Naive thymus-derived CD4-positive, alpha-beta T cell (primary cell): ENCODE measurements at regions of chr1 and their contacts with region 1.

Region 1: DNA sequence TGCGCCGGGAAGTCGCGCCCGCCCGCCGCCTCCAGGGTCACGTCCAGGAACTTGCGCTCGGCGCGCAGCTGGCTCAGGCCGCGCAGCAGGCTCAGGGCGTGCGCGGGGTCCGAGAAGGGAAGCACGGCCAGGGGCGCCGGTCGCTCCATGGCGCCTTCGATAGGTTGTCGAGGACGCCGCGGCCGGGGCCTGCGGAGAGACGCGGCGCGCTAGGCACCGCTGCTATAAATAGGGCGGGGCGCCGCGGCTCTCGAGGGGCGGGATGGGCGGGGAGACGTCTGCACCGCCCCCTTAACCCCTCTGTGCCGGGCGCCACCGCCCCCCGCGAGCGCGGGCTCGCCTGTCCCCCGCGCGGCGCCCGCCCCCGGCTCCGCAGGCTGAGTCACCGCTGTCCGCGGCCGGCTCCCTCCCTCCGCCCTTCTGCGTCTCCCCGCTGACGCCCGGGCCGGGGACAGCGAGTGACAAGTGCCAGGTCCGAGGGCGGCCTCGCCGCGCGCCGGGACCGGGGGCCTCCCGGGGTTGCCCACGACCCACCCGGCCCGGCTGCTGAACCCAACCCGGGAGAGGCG is at the start of gene KLHL21:
- DNase-seq: peak; percentile 70 to 93 (median 79)
- ATAC-seq: peak; percentile 82
- H3K4me3 ChIP-seq: peak within 1 kb of the TSS; percentile 98
- H3K4me3 Mint-ChIP-seq: peak within 1 kb of the TSS; percentile 89 to 99 (median 96)
- H3K27ac ChIP-seq: peak within 1 kb of the TSS; percentile 94
- H3K27ac Mint-ChIP-seq: peak within 1 kb of the TSS; percentile 95 to 99 (median 98)
- H3K4me1 ChIP-seq: peaks cover 28 to 30% of the 10 kb centered on the region in 2 donors
- H3K4me1 Mint-ChIP-seq: peaks cover 13 to 40% (median 34%) of the 10 kb centered on the region in 7 donors
- H3K27me3 ChIP-seq: no peaks in the 10 kb centered on the region
- H3K27me3 Mint-ChIP-seq: peaks cover 0 to 2% (median 0%) of the 10 kb centered on the region in 5 donors
- total RNA-seq, gene KLHL21: 25.2 to 58.1 (median 33.0) TPM

Region 2: GRCh38 chr1:6205849-6206519 is 396.8 kb before region 1 on chr1 and contains the start of gene RNF207:
- CTCF ChIA-PET with region 1: no interaction called
- POLR2A ChIA-PET with region 1: no interaction called
- intact Hi-C with region 1: loop called in 1 of 2 experiments (anchors 5 kb)
- DNase-seq: peak in 5 of 9 donors; percentile 21 to 86 (median 28)
- ATAC-seq: peak; percentile 67
- H3K4me3 ChIP-seq: peak within 1 kb of the TSS; percentile 58
- H3K4me3 Mint-ChIP-seq: peak within 1 kb of the TSS; percentile 60 to 88 (median 80)
- H3K27ac ChIP-seq: no peak within 1 kb of the TSS
- H3K27ac Mint-ChIP-seq: peak within 1 kb of the TSS in 2 of 9 donors; percentile 36 to 69
- H3K4me1 ChIP-seq: peaks cover 0 to 5% of the 10 kb centered on the region in 2 donors
- H3K4me1 Mint-ChIP-seq: peaks cover 5 to 25% (median 15%) of the 10 kb centered on the region in 7 donors
- H3K27me3 ChIP-seq: peaks cover 0 to 8% of the 10 kb centered on the region in 2 donors
- H3K27me3 Mint-ChIP-seq: peaks cover 0 to 19% (median 6%) of the 10 kb centered on the region in 5 donors
- total RNA-seq, gene RNF207: 0.81 to 83.6 (median 3.1) TPM

Region 3: DNA sequence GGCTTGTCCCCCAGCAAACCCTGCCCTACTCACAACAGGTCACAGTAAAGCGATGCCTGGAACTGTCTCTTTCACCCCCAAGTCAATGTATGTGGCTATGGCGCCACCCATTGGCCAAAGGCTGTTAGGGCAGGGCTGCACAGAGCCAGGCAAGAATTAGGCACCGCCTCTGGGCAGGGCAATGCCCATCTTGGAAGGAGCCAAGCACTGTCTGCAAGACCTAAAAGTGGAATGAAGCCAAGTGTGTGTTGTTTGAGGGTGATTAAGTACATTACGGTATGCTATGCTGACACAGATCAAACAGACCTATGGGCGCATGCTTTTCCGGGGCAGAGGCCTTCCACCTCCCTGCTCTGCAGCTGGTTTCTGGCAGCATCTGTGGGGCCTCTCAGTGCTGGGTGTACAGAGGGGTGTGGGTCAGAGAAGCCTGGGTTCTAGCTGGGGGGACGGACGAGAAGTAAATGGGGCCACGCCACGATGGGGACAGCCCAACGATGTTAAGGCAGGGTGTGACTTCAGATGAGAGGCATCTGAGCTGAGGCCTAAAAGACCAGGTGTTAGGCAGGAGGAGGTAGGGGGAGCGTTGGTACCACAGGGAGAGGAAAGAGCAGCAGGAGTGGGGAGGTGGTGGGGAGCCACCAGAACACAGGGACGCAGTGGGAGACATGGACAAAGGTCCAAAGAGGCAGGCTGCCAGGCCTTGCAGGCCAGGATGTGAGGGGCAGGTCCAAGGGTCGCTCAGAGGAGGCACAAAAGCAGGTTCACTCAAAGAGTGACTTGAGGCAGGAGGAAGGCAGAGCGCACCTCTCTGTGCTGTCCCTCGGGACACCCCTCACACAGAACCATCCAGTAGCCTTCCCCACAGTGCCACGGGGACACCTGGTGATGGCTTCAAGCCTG is 259.0 kb before region 1 on chr1:
- CTCF ChIA-PET with region 1: no interaction called
- POLR2A ChIA-PET with region 1: no interaction called
- intact Hi-C with region 1: no loop called
- DNase-seq: peak; percentile 19 to 67 (median 49)
- ATAC-seq: peak; percentile 73
- H3K4me3 ChIP-seq: no peak overlapping the region
- H3K4me3 Mint-ChIP-seq: no peak overlapping the region
- H3K27ac ChIP-seq: no peak overlapping the region
- H3K27ac Mint-ChIP-seq: peak overlapping the region in 1 of 9 donors; percentile 25
- H3K4me1 ChIP-seq: peaks cover 12 to 13% of the 10 kb centered on the region in 2 donors
- H3K4me1 Mint-ChIP-seq: peaks cover 9 to 24% (median 11%) of the 10 kb centered on the region in 7 donors
- H3K27me3 ChIP-seq: no peaks in the 10 kb centered on the region
- H3K27me3 Mint-ChIP-seq: no peaks in the 10 kb centered on the region

Region 4: GRCh38 chr1:6464514-6464836 is 138.3 kb before region 1 on chr1:
- CTCF ChIA-PET with region 1: no interaction called
- POLR2A ChIA-PET with region 1: interaction called, 11 read pairs
- intact Hi-C with region 1: loop called in 1 of 2 experiments (anchors 2 kb)
- DNase-seq: no peak
- ATAC-seq: no peak
- H3K4me3 ChIP-seq: peak overlapping the region; percentile 89
- H3K4me3 Mint-ChIP-seq: peak overlapping the region; percentile 89 to 98 (median 92)
- H3K27ac ChIP-seq: peak overlapping the region; percentile 94
- H3K27ac Mint-ChIP-seq: peak overlapping the region; percentile 90 to 99 (median 95)
- H3K4me1 ChIP-seq: peaks cover 31 to 53% of the 10 kb centered on the region in 2 donors
- H3K4me1 Mint-ChIP-seq: peaks cover 23 to 55% (median 49%) of the 10 kb centered on the region in 7 donors
- H3K27me3 ChIP-seq: no peaks in the 10 kb centered on the region
- H3K27me3 Mint-ChIP-seq: peaks cover 0 to 3% (median 0%) of the 10 kb centered on the region in 5 donors

Region 5: GRCh38 chr1:6579374-6580118 is 23.2 kb before region 1 on chr1 and contains the start of gene ZBTB48:
- CTCF ChIA-PET with region 1: interaction called, 7 read pairs
- POLR2A ChIA-PET with region 1: interaction called, 153 read pairs
- intact Hi-C with region 1: loop called (anchors 1 kb)
- DNase-seq: peak; percentile 92 to 97 (median 94)
- ATAC-seq: peak; percentile 98
- H3K4me3 ChIP-seq: peak within 1 kb of the TSS; percentile 76
- H3K4me3 Mint-ChIP-seq: peak within 1 kb of the TSS; percentile 76 to 97 (median 96)
- H3K27ac ChIP-seq: peak within 1 kb of the TSS; percentile 91
- H3K27ac Mint-ChIP-seq: peak within 1 kb of the TSS; percentile 88 to 98 (median 95)
- H3K4me1 ChIP-seq: peaks cover 25 to 27% of the 10 kb centered on the region in 2 donors
- H3K4me1 Mint-ChIP-seq: peaks cover 27 to 43% (median 35%) of the 10 kb centered on the region in 7 donors
- H3K27me3 ChIP-seq: no peaks in the 10 kb centered on the region
- H3K27me3 Mint-ChIP-seq: no peaks in the 10 kb centered on the region
- total RNA-seq, gene ZBTB48: 39.1 to 70.4 (median 62.2) TPM

Region 6: GRCh38 chr1:6624710-6625583 is 22.2 kb after region 1 on chr1 and contains the start of gene THAP3:
- CTCF ChIA-PET with region 1: interaction called, 8 read pairs
- POLR2A ChIA-PET with region 1: interaction called, 246 read pairs
- intact Hi-C with region 1: loop called (anchors 1 kb)
- DNase-seq: peak; percentile 77 to 90 (median 87)
- ATAC-seq: peak; percentile 99
- H3K4me3 ChIP-seq: peak within 1 kb of the TSS; percentile 52
- H3K4me3 Mint-ChIP-seq: peak within 1 kb of the TSS; percentile 86 to 97 (median 92)
- H3K27ac ChIP-seq: peak within 1 kb of the TSS; percentile 78
- H3K27ac Mint-ChIP-seq: peak within 1 kb of the TSS; percentile 72 to 96 (median 86)
- H3K4me1 ChIP-seq: peaks cover 13 to 18% of the 10 kb centered on the region in 2 donors
- H3K4me1 Mint-ChIP-seq: peaks cover 11 to 39% (median 30%) of the 10 kb centered on the region in 7 donors
- H3K27me3 ChIP-seq: no peaks in the 10 kb centered on the region
- H3K27me3 Mint-ChIP-seq: no peaks in the 10 kb centered on the region
- total RNA-seq, gene THAP3: 14.1 to 30.5 (median 20.3) TPM

Region 7: DNA sequence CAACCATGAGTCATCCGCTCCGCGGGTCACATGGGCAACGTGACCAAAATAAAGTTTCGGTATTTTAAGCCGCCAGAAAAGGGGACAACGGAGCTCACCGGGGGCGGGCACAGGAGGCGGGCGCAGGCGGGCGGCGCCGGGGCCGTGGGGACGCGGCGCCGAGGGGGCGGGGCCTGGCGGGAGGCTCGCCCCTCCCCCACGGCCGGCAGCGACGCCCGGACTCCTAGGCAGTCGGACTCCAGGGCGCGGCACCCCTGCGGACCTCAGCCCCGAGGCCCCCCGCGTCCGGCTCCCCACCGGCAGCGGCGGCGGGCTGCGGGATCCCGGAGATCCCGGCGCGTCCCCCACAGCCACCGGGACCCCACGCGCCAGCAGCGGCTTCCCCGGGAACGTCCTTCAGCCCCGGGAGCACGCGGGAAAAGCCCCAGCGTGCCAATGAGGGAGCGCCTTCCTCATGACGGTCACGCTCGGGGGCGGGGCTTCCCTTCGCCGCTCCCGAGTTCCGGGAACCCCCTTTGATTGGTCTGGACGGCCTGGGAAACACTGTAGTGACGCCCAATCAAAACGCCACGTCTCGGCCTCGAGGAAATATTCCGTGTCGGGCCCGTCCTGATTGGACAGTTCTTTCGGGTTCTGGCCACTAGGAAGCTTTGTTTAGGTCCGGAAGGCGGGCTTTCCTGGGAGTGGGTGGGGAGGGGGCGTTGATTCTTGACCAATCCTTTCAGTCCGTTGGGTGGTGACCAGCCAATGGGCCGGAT is 182.0 kb after region 1 on chr1:
- CTCF ChIA-PET with region 1: no interaction called
- POLR2A ChIA-PET with region 1: no interaction called
- intact Hi-C with region 1: loop called (anchors 2 to 5 kb)
- DNase-seq: peak; percentile 94 to 100 (median 100)
- ATAC-seq: peak; percentile 90
- H3K4me3 ChIP-seq: peak overlapping the region; percentile 79
- H3K4me3 Mint-ChIP-seq: peak overlapping the region; percentile 85 to 96 (median 90)
- H3K27ac ChIP-seq: peak overlapping the region; percentile 94
- H3K27ac Mint-ChIP-seq: peak overlapping the region; percentile 80 to 96 (median 93)
- H3K4me1 ChIP-seq: peaks cover 25 to 26% of the 10 kb centered on the region in 2 donors
- H3K4me1 Mint-ChIP-seq: peaks cover 29 to 45% (median 44%) of the 10 kb centered on the region in 7 donors
- H3K27me3 ChIP-seq: no peaks in the 10 kb centered on the region
- H3K27me3 Mint-ChIP-seq: peaks cover 0 to 3% (median 0%) of the 10 kb centered on the region in 5 donors